ENCODE measurements at regions of chr2 and their contacts with region 1.

Region 1: DNA sequence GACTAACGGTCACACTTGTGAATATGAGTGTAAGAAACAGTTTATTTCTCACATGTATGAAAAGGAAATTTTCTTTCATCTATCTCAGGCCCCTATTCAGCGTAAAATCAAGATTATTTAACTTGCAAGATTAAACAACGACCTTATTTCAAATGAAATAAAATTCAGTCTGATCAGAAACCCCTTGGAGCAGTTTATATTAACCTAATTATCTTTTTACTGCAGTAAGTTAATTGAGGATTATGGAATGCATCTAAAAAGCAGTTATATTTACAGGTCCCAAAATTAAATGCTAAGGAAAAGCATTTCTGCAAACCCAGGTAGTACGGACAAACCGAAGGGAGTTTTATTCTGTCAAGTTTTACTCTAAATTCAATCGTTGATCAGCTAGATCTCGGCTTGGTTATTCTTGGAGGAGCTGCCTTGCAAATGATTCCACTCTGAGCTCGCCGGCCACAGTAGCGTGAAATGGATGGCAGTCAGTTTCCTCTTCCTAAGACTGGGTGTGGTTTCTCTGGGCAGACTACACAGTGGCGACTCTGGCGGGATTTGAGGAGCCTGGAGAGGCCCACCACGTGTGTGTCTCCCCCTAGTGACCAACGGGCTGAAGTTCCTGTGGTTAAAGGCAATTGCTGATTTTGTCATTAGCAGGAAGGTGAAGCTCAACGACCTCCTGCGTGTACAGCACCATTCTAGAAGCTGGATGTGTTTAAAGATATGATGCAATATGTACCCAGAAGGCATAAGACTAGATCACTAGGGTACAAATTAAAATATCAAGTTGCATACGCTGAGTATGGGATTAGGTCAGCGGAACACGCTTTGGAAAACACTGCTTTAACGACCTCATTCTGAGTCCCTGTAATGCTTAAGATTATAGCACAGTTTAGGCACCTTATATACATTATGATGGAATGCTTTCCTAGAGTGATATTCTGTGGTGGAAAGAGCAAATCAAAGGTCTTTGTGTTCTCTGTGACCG is 36.4 kb downstream of the PRKRA start:
- DNase-seq: peak; percentile 90
- H3K4me3 Mint-ChIP-seq: peak overlapping the region; percentile 74
- H3K27ac Mint-ChIP-seq: peak overlapping the region; percentile 88
- H3K4me1 Mint-ChIP-seq: peaks cover 14% of the 10 kb centered on the region
- H3K27me3 Mint-ChIP-seq: peaks cover 3% of the 10 kb centered on the region

Region 2: DNA sequence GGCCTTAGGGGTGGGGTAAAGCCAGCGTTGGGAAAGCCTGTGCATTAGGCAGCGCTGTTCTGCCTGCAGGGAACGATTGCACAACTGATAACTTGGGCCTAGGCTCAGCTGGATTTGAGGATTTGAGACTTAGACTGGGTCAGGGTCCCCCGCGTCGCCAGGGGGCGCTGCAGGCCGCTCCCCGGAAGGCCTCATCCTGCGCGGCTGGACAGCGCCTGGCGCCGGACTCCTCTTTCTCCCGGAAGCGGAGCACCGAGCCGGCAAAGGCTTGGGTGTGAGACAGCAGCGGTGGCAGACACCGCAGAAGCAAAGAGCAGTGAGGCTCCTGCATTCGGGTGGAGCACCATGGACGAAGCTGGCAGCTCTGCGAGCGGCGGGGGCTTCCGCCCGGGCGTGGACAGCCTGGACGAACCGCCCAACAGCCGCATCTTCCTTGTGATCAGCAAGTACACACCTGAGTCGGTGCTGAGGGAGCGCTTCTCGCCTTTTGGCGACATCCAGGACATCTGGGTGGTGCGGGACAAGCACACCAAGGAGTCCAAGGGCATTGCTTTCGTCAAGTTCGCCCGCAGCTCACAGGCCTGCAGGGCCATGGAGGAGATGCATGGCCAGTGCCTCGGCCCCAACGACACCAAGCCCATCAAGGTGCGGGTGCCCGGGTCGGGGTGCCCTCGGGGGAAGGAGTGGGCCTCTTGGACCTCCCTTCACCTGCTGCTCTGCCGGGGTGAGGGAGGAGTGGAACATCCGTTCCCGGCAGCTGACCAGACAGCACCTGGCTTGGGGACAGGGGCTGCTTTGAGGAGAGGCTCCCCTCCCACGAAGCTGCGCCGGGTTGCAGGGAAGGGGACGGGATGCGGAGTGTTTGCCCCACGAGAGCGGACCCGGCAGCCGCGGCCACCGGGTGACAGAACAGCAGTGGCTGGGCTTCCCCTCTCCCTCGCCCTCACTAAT is 302.1 kb before region 1 on chr2 and contains the start of gene RBM45:
- CTCF ChIA-PET with region 1: interaction called, 36 read pairs
- POLR2A ChIA-PET with region 1: interaction called, 7 read pairs
- intact Hi-C with region 1: loop called (anchors 1 kb)
- DNase-seq: peak; percentile 91
- H3K4me3 Mint-ChIP-seq: peak within 1 kb of the TSS; percentile 95
- H3K27ac Mint-ChIP-seq: peak within 1 kb of the TSS; percentile 74
- H3K4me1 Mint-ChIP-seq: peaks cover 36% of the 10 kb centered on the region
- H3K27me3 Mint-ChIP-seq: no peaks in the 10 kb centered on the region
- total RNA-seq, gene RBM45: 12.2 to 12.5 TPM

Region 3: GRCh38 chr2:178193823-178194599 is 220.5 kb before region 1 on chr2 and contains the start of gene OSBPL6:
- CTCF ChIA-PET with region 1: no interaction called
- POLR2A ChIA-PET with region 1: no interaction called
- intact Hi-C with region 1: loop called (anchors 10 kb)
- DNase-seq: peak; percentile 74
- H3K4me3 Mint-ChIP-seq: peak within 1 kb of the TSS; percentile 66
- H3K27ac Mint-ChIP-seq: no peak within 1 kb of the TSS
- H3K4me1 Mint-ChIP-seq: peaks cover 9% of the 10 kb centered on the region
- H3K27me3 Mint-ChIP-seq: peaks cover 51% of the 10 kb centered on the region
- total RNA-seq, gene OSBPL6: 1.5 to 1.9 TPM

Region 4: GRCh38 chr2:178251151-178251955 is 163.2 kb before region 1 on chr2:
- CTCF ChIA-PET with region 1: no interaction called
- POLR2A ChIA-PET with region 1: no interaction called
- intact Hi-C with region 1: no loop called
- DNase-seq: no peak
- H3K4me3 Mint-ChIP-seq: no peak overlapping the region
- H3K27ac Mint-ChIP-seq: no peak overlapping the region
- H3K4me1 Mint-ChIP-seq: no peaks in the 10 kb centered on the region
- H3K27me3 Mint-ChIP-seq: peaks cover 2% of the 10 kb centered on the region

Region 5: GRCh38 chr2:178397002-178397605 is 17.5 kb before region 1 on chr2:
- CTCF ChIA-PET with region 1: interaction called, 116 read pairs
- POLR2A ChIA-PET with region 1: interaction called, 3 read pairs
- intact Hi-C with region 1: loop called (anchors 1 kb)
- DNase-seq: no peak
- H3K4me3 Mint-ChIP-seq: no peak overlapping the region
- H3K27ac Mint-ChIP-seq: no peak overlapping the region
- H3K4me1 Mint-ChIP-seq: no peaks in the 10 kb centered on the region
- H3K27me3 Mint-ChIP-seq: peaks cover 2% of the 10 kb centered on the region

Region 6: DNA sequence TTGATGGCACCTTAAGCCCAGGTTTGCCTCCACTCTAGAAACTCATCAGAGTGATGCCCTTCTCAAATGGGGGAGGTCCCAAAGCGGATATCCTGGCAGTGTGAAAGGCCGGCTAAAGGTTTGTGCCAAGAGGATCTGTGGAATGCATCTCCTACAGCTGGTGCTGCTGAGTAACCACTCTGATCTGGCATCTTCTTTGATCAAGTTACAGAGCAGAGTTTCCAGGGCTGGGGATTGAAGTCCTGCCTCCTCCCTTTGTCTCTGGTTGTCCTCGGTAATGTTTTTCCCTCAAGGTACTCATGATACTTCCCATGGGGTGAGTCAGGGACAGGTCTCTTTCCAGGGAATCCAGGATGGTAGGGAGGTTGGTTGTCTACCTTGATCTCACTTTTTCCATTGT is 11.8 kb after region 1 on chr2:
- CTCF ChIA-PET with region 1: interaction called, 12 read pairs
- POLR2A ChIA-PET with region 1: no interaction called
- intact Hi-C with region 1: loop called (anchors 1 kb)
- DNase-seq: no peak
- H3K4me3 Mint-ChIP-seq: no peak overlapping the region
- H3K27ac Mint-ChIP-seq: no peak overlapping the region
- H3K4me1 Mint-ChIP-seq: no peaks in the 10 kb centered on the region
- H3K27me3 Mint-ChIP-seq: no peaks in the 10 kb centered on the region

Region 7: GRCh38 chr2:178478439-178479274 is 64.1 kb after region 1 on chr2 and contains the start of gene FKBP7:
- CTCF ChIA-PET with region 1: no interaction called
- POLR2A ChIA-PET with region 1: no interaction called
- intact Hi-C with region 1: loop called (anchors 1 kb)
- DNase-seq: peak; percentile 87
- H3K4me3 Mint-ChIP-seq: peak within 1 kb of the TSS; percentile 97
- H3K27ac Mint-ChIP-seq: peak within 1 kb of the TSS; percentile 97
- H3K4me1 Mint-ChIP-seq: peaks cover 33% of the 10 kb centered on the region
- H3K27me3 Mint-ChIP-seq: no peaks in the 10 kb centered on the region
- total RNA-seq, gene FKBP7: 2.8 to 2.9 TPM

Region 8: DNA sequence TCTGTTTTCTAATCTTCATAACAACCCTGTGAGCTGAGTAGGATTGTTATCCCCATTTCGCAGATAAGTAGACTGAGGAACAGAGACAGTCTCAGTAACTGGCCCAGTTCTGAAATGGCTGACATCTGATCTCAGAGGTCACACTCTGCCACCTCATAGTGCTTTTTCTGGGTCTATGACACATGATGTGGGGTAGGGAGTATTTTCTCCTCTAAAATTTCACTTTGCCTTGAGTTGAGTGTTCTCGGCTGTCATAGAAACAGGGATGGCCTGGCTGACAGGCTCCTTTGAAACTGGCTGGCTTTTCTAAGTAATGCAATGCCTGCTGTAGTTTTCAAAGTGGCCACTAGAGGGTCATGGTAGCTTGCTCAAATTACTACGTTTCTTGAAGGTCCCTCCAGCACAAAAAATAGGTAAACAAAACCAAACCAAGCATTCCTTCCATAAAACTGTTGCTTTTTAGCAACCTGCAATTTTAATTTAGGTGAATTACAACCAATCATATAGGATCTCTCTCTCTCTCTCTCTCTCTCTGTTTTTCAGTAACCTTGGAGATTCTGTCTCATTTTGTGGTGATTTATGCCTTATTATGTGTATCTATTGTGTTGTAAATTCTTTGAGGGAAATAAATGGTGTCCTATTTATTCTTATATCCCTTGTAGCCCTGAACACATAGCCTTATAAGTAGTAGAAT is 476.9 kb after region 1 on chr2:
- CTCF ChIA-PET with region 1: no interaction called
- POLR2A ChIA-PET with region 1: no interaction called
- intact Hi-C with region 1: loop called (anchors 10 kb)
- DNase-seq: peak; percentile 61
- H3K4me3 Mint-ChIP-seq: no peak overlapping the region
- H3K27ac Mint-ChIP-seq: no peak overlapping the region
- H3K4me1 Mint-ChIP-seq: no peaks in the 10 kb centered on the region
- H3K27me3 Mint-ChIP-seq: no peaks in the 10 kb centered on the region

Measured in activated CD4-positive, alpha-beta memory T cell treated with anti-CD3 and anti-CD28 coated beads for 36 hours (primary cell).